Posterior vena cava (tissue), 2 donors: ENCODE measurements at regions of chr3 and their contacts with region 1.

Region 1: GRCh38 chr3:61920940-61921339 is 359.6 kb downstream of the PTPRG start:
- DNase-seq: no peak

Region 2: GRCh38 chr3:61882253-61882652 is 38.7 kb before region 1 on chr3:
- intact Hi-C with region 1: loop called in 1 of 2 experiments (anchors 1 kb)
- DNase-seq: no peak

Region 3: DNA sequence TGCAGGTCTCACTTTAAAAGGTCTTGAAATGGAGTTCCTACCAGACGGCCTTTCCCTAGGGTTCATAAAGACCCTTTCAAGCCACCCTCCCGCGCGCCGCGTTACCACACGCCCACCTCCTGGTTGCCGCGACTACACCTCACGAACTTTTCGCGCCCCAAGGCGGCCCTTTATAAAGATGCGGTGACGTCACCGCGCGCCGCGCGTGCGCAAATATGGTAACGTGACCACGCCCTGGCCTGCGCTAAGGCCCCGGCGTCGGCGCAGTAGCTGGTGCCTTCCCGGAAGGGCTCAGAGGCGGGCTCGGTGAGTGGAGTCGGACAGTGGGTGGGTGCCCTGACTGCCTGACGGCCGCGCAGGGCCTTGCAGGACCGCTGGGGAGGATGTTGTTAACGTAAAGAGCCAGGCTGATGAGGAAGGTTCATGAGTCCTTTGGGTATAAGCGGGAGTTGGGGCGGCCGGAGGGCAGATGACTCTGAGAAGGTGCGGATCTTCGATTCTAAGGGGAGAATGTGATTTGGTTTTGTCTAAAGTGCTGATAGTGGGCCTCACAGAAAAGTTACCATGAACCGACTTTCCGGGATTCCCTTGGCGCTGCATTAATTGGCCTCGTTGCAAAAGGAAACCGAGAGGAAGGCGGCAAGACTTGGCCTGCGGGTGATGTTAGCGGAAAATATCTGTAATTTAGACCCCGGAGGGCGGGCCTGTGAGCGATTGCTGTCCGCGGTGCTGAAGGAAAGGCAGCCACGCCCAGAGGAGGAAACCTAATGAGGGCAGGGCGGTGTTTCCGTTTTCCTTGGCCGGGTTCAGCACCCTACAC is 398.0 kb after region 1 on chr3:
- intact Hi-C with region 1: no loop called
- DNase-seq: peak; percentile 96